Posterior cingulate gyrus (tissue), 11 donors: ENCODE measurements at regions of chr13 and their contacts with region 1.

Region 1: GRCh38 chr13:107211073-107211472 is 643.1 kb upstream of the ARGLU1 start:
- DNase-seq: peak; percentile 68 to 97 (median 86)

Region 2: DNA sequence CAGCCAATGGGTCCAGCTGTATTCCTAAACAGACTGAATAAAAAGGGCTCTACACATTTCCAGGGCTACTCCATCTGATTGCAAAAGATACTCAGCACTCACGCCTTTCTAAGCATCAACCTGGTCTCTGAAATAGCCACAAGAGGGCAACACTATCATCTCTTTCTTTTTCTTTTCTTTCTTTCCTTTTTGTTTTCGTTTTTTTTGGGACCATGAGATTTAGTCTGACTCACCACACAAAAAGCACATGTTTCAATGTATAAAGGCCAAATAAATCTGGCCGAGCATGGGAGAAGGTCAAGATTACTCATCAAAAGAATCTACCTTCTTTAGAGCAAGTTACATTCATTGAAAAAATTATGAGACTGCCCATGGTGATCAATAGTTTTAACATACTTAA is 162.5 kb after region 1 on chr13:
- intact Hi-C with region 1: loop called (anchors 10 kb)
- DNase-seq: no peak

Region 3: GRCh38 chr13:107650081-107650701 is 439.1 kb after region 1 on chr13:
- intact Hi-C with region 1: loop called (anchors 1 kb)
- DNase-seq: peak; percentile 34 to 92 (median 55)

Region 4: DNA sequence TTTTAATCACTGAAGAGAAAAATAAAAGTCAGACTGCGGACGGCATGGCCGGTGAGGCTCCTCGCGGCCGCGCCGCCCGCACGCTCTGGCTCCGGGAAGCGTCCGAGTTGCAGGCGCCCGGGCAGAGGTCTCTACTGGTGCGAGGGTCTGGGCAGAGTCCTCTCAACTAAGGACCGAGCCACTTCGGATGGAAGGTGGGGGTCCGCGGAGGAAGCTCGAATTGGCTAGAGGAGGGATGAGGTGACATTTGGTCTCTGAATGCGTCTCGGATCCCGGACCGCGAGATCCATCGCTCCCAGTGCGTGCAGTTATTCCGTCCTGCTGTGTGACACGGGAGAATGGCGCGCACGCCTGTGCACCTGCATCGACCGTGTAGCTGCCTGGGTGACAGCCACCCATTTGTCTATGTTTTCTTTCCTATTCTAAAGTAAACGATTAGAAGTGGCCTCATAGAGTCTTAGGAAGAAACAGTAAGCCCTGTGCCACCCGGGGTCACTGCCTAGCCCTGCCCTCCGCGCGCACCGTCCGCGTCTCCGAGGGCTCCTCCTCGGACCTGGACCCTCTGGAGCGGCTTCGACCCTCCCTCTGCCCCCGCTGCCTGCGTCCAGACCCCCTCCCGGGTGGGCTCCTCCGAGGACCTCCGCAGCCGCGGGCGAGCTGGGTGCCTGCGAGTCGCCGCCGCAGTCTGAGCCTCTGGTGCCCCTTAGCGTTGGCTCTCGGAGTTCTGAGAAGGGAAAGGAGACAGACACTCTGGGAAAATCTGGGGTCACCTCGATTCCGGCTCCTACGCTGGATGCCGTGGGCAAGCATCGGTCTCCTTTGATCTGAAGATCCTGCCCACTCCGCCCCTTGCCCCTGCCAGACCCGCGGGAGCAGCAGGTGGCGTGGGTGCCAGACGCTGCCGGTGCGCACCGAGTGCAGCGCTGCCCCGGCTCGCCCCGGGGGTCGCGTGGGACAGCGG is 656.9 kb after region 1 on chr13:
- intact Hi-C with region 1: loop called (anchors 1 kb)
- DNase-seq: peak; percentile 46 to 96 (median 73)

Region 5: GRCh38 chr13:108155185-108156106 is 944.4 kb after region 1 on chr13:
- intact Hi-C with region 1: loop called (anchors 1 kb)
- DNase-seq: peak in 9 of 10 donors; percentile 49 to 90 (median 69)